T-cell (primary cell): ENCODE measurements at regions of chr17 and their contacts with region 1.

Region 1: GRCh38 chr17:10992106-10992880 is 154.4 kb upstream of the PIRT start:
- DNase-seq: no peak
- ATAC-seq: no peak
- H3K4me3 ChIP-seq: no peak overlapping the region
- H3K4me3 Mint-ChIP-seq: no peak overlapping the region
- H3K27ac ChIP-seq: no peak overlapping the region
- H3K27ac Mint-ChIP-seq: no peak overlapping the region
- H3K4me1 ChIP-seq: no peaks in the 10 kb centered on the region
- H3K4me1 Mint-ChIP-seq: no peaks in the 10 kb centered on the region
- H3K27me3 ChIP-seq: no peaks in the 10 kb centered on the region
- H3K27me3 Mint-ChIP-seq: peaks cover 14 to 23% of the 10 kb centered on the region in 2 donors

Region 2: GRCh38 chr17:11298401-11298800 is 306.1 kb after region 1 on chr17:
- CTCF ChIA-PET with region 1: interaction called in 1 of 2 experiments, 12 read pairs
- POLR2A ChIA-PET with region 1: no interaction called
- DNase-seq: no peak
- ATAC-seq: no peak
- H3K4me3 ChIP-seq: no peak overlapping the region
- H3K4me3 Mint-ChIP-seq: no peak overlapping the region
- H3K27ac ChIP-seq: no peak overlapping the region
- H3K27ac Mint-ChIP-seq: no peak overlapping the region
- H3K4me1 ChIP-seq: no peaks in the 10 kb centered on the region
- H3K4me1 Mint-ChIP-seq: no peaks in the 10 kb centered on the region
- H3K27me3 ChIP-seq: no peaks in the 10 kb centered on the region
- H3K27me3 Mint-ChIP-seq: no peaks in the 10 kb centered on the region